ENCODE measurements at regions of chr1 and their contacts with region 1.

Region 1: DNA sequence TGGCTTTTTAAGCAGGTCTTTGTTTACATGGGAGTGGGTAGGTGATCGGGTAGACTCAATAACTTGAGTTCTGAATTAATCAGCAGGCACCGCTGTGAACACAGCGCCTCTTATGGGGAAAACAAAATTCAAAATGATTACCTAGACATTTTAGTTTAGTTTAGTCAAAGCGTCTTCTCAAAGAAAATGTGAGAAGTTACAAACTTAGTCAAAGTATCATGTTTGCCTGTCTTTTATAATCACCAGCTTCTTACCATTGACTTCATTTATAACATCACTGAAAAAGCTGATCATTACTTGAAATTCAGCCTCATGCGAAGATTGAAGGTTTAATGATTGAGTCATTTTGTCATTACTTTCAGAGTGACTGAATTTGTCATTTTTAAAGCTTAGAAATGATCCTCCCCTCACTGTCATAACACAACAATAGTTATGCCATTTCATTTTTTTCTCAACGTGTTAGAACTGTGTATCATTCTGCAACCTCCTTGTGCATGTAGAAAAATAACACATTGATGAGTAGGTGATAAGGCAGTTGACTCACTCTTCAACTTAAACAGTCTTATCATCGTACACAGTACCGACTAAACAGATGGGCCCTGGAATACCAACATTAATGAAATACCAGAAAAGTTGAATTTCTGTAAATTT is 188.5 kb downstream of the NFIA start:
- DNase-seq: no peak
- H3K4me3 ChIP-seq: no peak overlapping the region
- H3K27ac ChIP-seq: peak overlapping the region in 53 of 59 donors; percentile 3 to 92 (median 79)
- H3K27me3 ChIP-seq: no peaks in the 10 kb centered on the region
- CTCF ChIP-seq: peak in 16 of 56 donors; percentile 8 to 54 (median 28)

Region 2: GRCh38 chr1:60866917-60867531 is 403.9 kb before region 1 on chr1:
- intact Hi-C with region 1: no loop called
- DNase-seq: no peak
- H3K4me3 ChIP-seq: peak overlapping the region in 55 of 59 donors; percentile 5 to 57 (median 34)
- H3K27ac ChIP-seq: peak overlapping the region in 38 of 59 donors; percentile 13 to 78 (median 59)
- H3K27me3 ChIP-seq: peaks cover 0 to 70% (median 21%) of the 10 kb centered on the region in 45 donors
- CTCF ChIP-seq: no peak

Region 3: GRCh38 chr1:61226784-61227567 is 43.9 kb before region 1 on chr1:
- intact Hi-C with region 1: loop called (anchors 5 kb)
- DNase-seq: peak in 1 of 10 donors; percentile 80
- H3K4me3 ChIP-seq: peak overlapping the region in 6 of 59 donors; percentile 8 to 26 (median 14)
- H3K27ac ChIP-seq: peak overlapping the region in 18 of 59 donors; percentile 1 to 63 (median 27)
- H3K27me3 ChIP-seq: no peaks in the 10 kb centered on the region
- CTCF ChIP-seq: no peak

Measured in dorsolateral prefrontal cortex (tissue), 120 donors.